ENCODE measurements at regions of chr11 and their contacts with region 1.

Region 1: GRCh38 chr11:117143871-117144476 is at the start of gene PAFAH1B2:
- DNase-seq: peak; percentile 97
- ATAC-seq: peak; percentile 94
- H3K4me3 Mint-ChIP-seq: peak within 1 kb of the TSS; percentile 100
- H3K27ac Mint-ChIP-seq: peak within 1 kb of the TSS; percentile 88
- H3K4me1 Mint-ChIP-seq: peaks cover 39% of the 10 kb centered on the region
- H3K27me3 Mint-ChIP-seq: peaks cover 24% of the 10 kb centered on the region
- total RNA-seq, gene PAFAH1B2: 54.5 to 66.4 TPM

Region 2: DNA sequence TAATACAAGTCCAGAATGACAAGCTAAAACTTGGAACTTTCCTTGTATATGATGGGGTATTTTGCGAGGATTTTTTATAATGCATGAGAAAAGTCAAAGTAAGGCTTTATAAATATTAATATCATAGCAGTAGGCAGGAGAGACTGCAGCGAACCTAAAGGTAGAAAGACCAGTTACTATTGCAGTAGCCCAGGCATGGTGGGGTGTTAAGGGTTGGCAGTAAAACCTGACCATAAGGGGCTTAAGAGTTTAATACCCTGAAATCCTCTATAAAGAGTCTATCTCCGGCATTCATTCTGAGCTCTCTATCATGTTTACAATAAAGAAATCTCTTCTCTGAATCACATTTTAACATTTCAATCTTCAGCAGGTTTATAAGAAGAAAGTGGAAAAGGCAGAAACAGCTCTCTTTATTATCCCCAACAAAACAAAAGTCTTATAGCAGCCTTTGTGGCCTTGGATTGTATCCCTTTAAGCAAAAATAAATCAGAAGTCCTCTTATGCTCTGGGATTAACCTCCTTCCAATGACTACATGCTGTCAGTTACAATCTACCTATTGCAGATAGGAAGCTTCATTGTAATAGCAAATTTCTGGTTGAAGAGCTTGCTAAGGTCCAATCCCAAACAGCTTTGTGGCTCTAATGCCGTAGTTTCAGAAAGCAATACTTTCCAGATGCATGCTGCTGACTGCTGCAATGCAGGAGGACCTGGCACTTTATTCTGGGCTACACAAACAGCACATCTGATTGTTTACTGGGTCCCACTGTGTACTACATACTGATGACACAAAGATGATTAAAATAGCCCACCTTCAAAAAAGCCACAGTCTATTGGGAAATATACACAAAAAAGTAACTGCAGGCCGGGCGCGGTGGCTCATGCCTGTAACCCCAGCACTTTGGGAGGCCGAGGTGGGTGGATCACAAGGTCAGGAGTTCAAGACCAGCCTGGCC is 91.5 kb before region 1 on chr11:
- CTCF ChIA-PET with region 1: no interaction called
- DNase-seq: no peak
- ATAC-seq: no peak
- H3K4me3 Mint-ChIP-seq: no peak overlapping the region
- H3K27ac Mint-ChIP-seq: no peak overlapping the region
- H3K4me1 Mint-ChIP-seq: no peaks in the 10 kb centered on the region
- H3K27me3 Mint-ChIP-seq: no peaks in the 10 kb centered on the region

Region 3: GRCh38 chr11:117178210-117179034 is 34.4 kb after region 1 on chr11 and contains the start of gene SIDT2:
- CTCF ChIA-PET with region 1: interaction called, 29 read pairs
- DNase-seq: peak; percentile 95
- ATAC-seq: peak; percentile 96
- H3K4me3 Mint-ChIP-seq: peak within 1 kb of the TSS; percentile 90
- H3K27ac Mint-ChIP-seq: peak within 1 kb of the TSS; percentile 85
- H3K4me1 Mint-ChIP-seq: peaks cover 33% of the 10 kb centered on the region
- H3K27me3 Mint-ChIP-seq: no peaks in the 10 kb centered on the region
- total RNA-seq, gene SIDT2: 18.9 to 21.3 TPM